ENCODE measurements at regions of chr11 and their contacts with region 1.

Region 1: DNA sequence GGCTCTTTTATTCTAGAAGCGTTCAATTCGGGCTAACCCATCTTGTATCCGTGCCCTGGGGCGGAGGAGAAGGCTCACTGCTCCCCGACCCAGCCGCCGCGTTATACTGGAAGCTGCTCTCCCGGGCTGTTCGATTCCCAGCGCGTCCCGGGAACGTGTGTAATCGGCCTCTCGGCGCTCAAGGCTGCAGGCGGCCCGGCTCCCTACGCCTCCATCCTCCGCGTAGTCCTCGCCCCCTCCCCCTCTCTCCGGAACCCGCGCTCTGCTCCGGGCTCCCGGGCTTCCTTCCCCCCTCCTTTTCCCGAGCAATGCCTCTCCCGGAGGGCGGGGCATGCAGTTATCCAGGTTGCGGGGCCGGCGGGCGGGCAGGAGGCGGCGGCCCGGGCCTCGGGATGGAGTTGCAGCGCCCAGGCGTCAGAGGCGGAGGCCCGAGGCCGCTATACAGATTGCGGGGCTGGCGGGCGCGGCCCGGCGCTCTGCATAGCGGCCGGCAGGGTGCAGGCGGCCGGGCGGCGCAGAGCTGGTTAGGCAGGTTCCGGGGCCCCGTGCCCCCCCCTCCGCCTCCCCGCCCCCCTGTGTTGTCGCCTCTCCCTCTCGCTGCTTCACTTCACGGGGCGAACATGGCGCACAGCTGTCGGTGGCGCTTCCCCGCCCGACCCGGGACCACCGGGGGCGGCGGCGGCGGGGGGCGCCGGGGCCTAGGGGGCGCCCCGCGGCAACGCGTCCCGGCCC is at the start of gene KMT2A:
- DNase-seq: peak; percentile 94 to 98 (median 94)
- ATAC-seq: peak; percentile 69
- H3K4me3 ChIP-seq: peak within 1 kb of the TSS; percentile 91
- H3K27ac ChIP-seq: peak within 1 kb of the TSS; percentile 89
- H3K4me1 ChIP-seq: peaks cover 32 to 37% of the 10 kb centered on the region in 2 experiments
- H3K27me3 ChIP-seq: no peaks in the 10 kb centered on the region
- CTCF ChIP-seq: no peak; a peak in 1 of 6 replicates
- EP300 ChIP-seq: 0 out of 2 replicates have a peak, but pooled peaks have one; percentile 7
- POLR2A ChIP-seq: peak; percentile 60; the same call in 1 of the 2 replicates
- RAD21 ChIP-seq: no peak
- polyA plus RNA-seq, gene KMT2A: 9.6 to 10.8 TPM

Region 2: GRCh38 chr11:118401151-118401878 is 34.7 kb before region 1 on chr11 and contains the start of gene ATP5MG:
- CTCF ChIA-PET with region 1: no interaction called
- POLR2A ChIA-PET with region 1: interaction called, 6 read pairs
- in situ Hi-C with region 1: no loop called
- intact Hi-C with region 1: loop called (anchors 1 kb)
- DNase-seq: peak; percentile 90 to 94 (median 91)
- ATAC-seq: peak; percentile 82
- H3K4me3 ChIP-seq: peak within 1 kb of the TSS; percentile 95
- H3K27ac ChIP-seq: peak within 1 kb of the TSS; percentile 96
- H3K4me1 ChIP-seq: peaks cover 15 to 17% of the 10 kb centered on the region in 2 experiments; a peak in 4 of 5 replicates
- H3K27me3 ChIP-seq: no peaks in the 10 kb centered on the region
- CTCF ChIP-seq: peak in 2 of 3 experiments; percentile 1 to 8; a peak in 1 of 6 replicates
- EP300 ChIP-seq: no peak
- POLR2A ChIP-seq: peak; percentile 84
- RAD21 ChIP-seq: no peak; a peak in 1 of 4 replicates
- polyA plus RNA-seq, gene ATP5MG: 1,842 to 2,138 TPM

Region 3: GRCh38 chr11:118415739-118416284 is 20.2 kb before region 1 on chr11:
- CTCF ChIA-PET with region 1: no interaction called
- POLR2A ChIA-PET with region 1: interaction called, 4 read pairs
- in situ Hi-C with region 1: no loop called
- intact Hi-C with region 1: loop called (anchors 1 kb)
- DNase-seq: peak; percentile 38 to 94 (median 68)
- ATAC-seq: peak; percentile 92
- H3K4me3 ChIP-seq: no peak overlapping the region
- H3K27ac ChIP-seq: peak overlapping the region; percentile 62; the same call in 1 of the 3 replicates
- H3K4me1 ChIP-seq: peaks cover 4 to 20% of the 10 kb centered on the region in 2 experiments; a peak in 3 of 5 replicates
- H3K27me3 ChIP-seq: no peaks in the 10 kb centered on the region
- CTCF ChIP-seq: no peak
- EP300 ChIP-seq: peak; percentile 95
- POLR2A ChIP-seq: no peak
- RAD21 ChIP-seq: peak; percentile 11 to 27; a peak in 3 of 4 replicates

Region 4: GRCh38 chr11:118448294-118448693 is 12.2 kb after region 1 on chr11:
- CTCF ChIA-PET with region 1: no interaction called
- POLR2A ChIA-PET with region 1: interaction called, 13 read pairs
- in situ Hi-C with region 1: no loop called
- intact Hi-C with region 1: no loop called
- DNase-seq: no peak
- ATAC-seq: 0 out of 3 replicates have a peak, but pooled peaks have one; percentile 21
- H3K4me3 ChIP-seq: no peak overlapping the region
- H3K27ac ChIP-seq: peak overlapping the region; percentile 18; the same call in 1 of the 3 replicates
- H3K4me1 ChIP-seq: peaks cover 4% of the 10 kb centered on the region in 2 experiments; a peak in 2 of 5 replicates
- H3K27me3 ChIP-seq: no peaks in the 10 kb centered on the region
- CTCF ChIP-seq: no peak
- EP300 ChIP-seq: no peak
- POLR2A ChIP-seq: no peak
- RAD21 ChIP-seq: no peak

Measured in K562 (cell line).